MCF 10A (cell line): ENCODE measurements at regions of chr5 and their contacts with region 1.

Region 1: GRCh38 chr5:111748304-111748763 is 8.7 kb downstream of the NREP start:
- DNase-seq: peak; percentile 92
- H3K4me3 Mint-ChIP-seq: peak overlapping the region; percentile 2
- H3K27ac Mint-ChIP-seq: peak overlapping the region; percentile 40
- H3K4me1 Mint-ChIP-seq: peaks cover 24% of the 10 kb centered on the region
- H3K27me3 Mint-ChIP-seq: no peaks in the 10 kb centered on the region
- CTCF ChIP-seq: no peak

Region 2: GRCh38 chr5:111641533-111642230 is 106.7 kb before region 1 on chr5:
- CTCF ChIA-PET with region 1: no interaction called
- POLR2A ChIA-PET with region 1: no interaction called
- intact Hi-C with region 1: no loop called
- DNase-seq: peak; percentile 43
- H3K4me3 Mint-ChIP-seq: no peak overlapping the region
- H3K27ac Mint-ChIP-seq: no peak overlapping the region
- H3K4me1 Mint-ChIP-seq: peaks cover 9% of the 10 kb centered on the region
- H3K27me3 Mint-ChIP-seq: no peaks in the 10 kb centered on the region
- CTCF ChIP-seq: no peak

Region 3: GRCh38 chr5:111703662-111704061 is 44.7 kb before region 1 on chr5:
- CTCF ChIA-PET with region 1: no interaction called
- POLR2A ChIA-PET with region 1: interaction called, 3 read pairs
- intact Hi-C with region 1: loop called (anchors 5 kb)
- DNase-seq: no peak
- H3K4me3 Mint-ChIP-seq: no peak overlapping the region
- H3K27ac Mint-ChIP-seq: no peak overlapping the region
- H3K4me1 Mint-ChIP-seq: peaks cover 28% of the 10 kb centered on the region
- H3K27me3 Mint-ChIP-seq: no peaks in the 10 kb centered on the region
- CTCF ChIP-seq: no peak